Ascending aorta (tissue), 2 donors: ENCODE measurements at regions of chr18 and their contacts with region 1.

Region 1: GRCh38 chr18:49016631-49017539 is 66.1 kb upstream of the SMAD7 start:
- DNase-seq: peak in 1 of 2 donors; percentile 87
- H3K4me3 ChIP-seq: no peak overlapping the region
- H3K27ac ChIP-seq: peak overlapping the region; percentile 53 to 68
- H3K4me1 ChIP-seq: peaks cover 7 to 15% of the 10 kb centered on the region in 2 donors
- H3K27me3 ChIP-seq: no peaks in the 10 kb centered on the region
- CTCF ChIP-seq: no peak

Region 2: DNA sequence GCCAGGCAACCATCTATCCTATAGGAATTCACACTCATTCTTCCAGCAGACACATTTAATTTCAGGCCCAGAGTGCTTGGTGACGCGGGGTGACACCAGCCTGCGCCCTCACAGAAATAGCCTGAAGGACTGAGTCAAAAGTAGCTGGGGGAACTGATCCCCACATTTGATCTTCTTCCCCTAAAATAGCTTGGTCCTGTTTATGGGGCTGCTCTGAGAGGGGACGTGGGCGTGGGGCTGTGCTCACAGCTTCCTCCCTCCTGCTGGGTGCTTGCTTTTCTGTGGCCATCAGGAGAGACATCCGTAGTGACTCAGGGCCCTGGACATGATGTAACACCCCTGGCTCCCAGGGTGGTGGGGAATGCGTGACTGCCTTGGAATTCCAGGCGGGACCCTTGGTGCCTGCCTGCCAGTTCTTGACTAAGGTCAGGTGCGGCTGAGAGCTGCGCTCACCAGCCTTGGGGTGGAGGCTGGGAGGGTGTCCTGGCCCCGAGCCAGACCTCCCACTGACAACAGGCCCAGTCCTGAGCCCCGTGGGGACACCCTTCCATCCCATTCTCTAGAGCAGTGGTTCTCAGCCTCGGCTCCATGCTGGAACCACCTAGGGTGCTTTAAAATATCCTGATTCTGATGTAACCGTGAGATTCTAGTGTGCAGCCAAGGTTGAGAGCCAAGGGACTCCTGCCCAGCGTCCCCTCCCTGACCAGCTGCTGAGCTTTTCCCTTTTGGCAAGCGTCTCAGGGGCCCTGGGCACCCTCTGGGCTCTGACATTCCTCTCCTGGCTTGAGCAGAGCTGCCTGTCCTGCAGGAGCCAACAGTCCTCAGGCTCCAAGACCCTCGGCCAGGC is 18.7 kb before region 1 on chr18:
- intact Hi-C with region 1: loop called (anchors 2 kb)
- DNase-seq: peak; percentile 81 to 97
- H3K4me3 ChIP-seq: peak overlapping the region in 1 of 2 donors; percentile 17
- H3K27ac ChIP-seq: peak overlapping the region; percentile 87 to 88
- H3K4me1 ChIP-seq: peaks cover 16 to 41% of the 10 kb centered on the region in 2 donors
- H3K27me3 ChIP-seq: no peaks in the 10 kb centered on the region
- CTCF ChIP-seq: no peak